B cell (primary cell): ENCODE measurements at regions of chr4 and their contacts with region 1.

Region 1: DNA sequence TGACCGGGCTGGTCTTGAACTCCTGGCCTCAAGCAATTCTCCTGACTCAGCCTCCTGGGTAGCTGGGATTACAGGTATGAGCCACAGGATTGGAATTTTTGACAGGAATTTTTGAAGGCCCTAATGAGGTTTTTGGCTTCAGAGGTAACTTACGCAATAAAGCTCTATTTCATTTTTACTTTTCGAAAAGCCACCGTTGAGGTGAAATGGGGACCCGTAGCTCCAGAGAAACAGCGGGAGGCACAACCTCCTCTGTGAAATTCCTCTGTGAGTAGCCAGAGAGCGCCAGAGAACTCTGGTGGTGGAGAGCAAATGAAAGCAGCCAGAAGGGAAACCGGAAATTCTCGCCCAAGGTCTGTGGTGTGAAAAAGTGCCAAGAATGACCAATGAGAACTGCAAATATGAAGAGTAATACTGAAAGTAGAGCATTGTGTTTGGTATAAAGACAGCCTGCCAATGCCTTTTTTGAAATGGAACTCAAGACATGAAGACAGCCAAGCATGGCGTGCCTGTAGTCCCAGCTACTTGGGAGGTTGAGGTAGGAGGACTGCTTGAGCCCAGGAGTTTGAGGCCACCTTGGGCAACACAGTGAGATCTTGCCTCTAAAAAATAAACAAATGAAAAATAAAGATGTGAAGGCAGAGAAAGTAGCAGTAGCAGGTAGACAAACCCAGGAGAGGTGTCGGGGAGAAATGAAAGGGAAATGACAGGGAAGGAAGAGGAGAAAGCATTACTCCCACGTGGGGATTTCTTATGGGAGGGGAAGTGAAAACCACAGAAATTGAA is 33.0 kb upstream of the TMEM131L start:
- DNase-seq: peak; percentile 88
- ATAC-seq: peak; percentile 81
- H3K4me3 ChIP-seq: peak overlapping the region; percentile 29 to 65 (median 40)
- H3K4me3 Mint-ChIP-seq: peak overlapping the region; percentile 78
- H3K27ac ChIP-seq: peak overlapping the region; percentile 84 to 85
- H3K27ac Mint-ChIP-seq: peak overlapping the region; percentile 84
- H3K4me1 ChIP-seq: peaks cover 60 to 64% of the 10 kb centered on the region in 2 donors
- H3K4me1 Mint-ChIP-seq: peaks cover 65% of the 10 kb centered on the region
- H3K27me3 ChIP-seq: no peaks in the 10 kb centered on the region
- H3K27me3 Mint-ChIP-seq: no peaks in the 10 kb centered on the region
- CTCF ChIP-seq: peak; percentile 77

Region 2: DNA sequence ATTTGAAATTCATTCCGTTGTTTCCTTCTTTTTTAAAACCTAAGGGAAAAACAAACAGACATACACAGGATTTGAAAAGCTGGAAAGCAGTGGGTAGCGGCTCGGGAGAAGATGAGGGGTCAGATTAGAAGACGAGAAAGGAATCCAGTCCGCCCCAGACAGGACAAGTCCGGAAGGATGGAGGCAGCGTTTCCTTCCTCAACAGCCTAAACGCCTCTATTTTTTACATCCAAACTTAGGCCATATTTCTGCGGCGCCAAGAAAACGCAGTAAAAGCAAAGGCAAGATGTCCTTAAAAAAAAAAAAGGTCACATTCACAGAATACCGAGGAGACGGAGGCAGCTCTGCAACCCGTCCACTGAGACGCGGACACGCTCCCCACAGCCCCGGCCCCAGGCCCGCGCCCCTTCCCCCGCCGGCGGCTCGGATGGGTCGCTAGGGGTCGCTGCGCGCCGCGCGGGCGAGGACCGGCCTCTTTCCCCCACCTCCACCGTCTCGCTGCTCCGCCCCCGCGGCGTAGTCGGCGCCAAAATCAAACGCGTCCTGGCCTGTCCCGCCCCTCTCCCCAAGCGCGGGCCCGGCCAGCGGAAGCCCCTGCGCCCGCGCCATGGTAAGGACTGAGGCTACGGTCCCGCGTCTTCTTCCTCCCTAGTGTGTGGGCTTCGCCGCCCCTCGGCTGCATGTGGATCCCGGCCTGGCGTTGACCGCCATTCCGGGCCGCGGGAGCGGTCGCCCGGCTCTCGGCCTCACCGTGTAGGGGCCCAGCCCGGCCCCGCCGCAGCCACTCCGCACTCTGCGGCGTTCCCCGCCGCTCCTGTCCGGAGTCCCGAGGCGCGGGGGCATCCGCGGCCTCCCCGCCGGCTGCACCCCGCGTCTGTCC is 88.8 kb before region 1 on chr4 and contains the start of gene MND1:
- CTCF ChIA-PET with region 1: interaction called, 15 read pairs
- POLR2A ChIA-PET with region 1: no interaction called
- intact Hi-C with region 1: loop called (anchors 1 kb)
- DNase-seq: peak; percentile 90
- ATAC-seq: peak; percentile 92
- H3K4me3 ChIP-seq: peak within 1 kb of the TSS; percentile 62 to 90 (median 74)
- H3K4me3 Mint-ChIP-seq: peak within 1 kb of the TSS; percentile 95
- H3K27ac ChIP-seq: no peak within 1 kb of the TSS
- H3K27ac Mint-ChIP-seq: peak within 1 kb of the TSS; percentile 33
- H3K4me1 ChIP-seq: peaks cover 25% of the 10 kb centered on the region in 2 donors
- H3K4me1 Mint-ChIP-seq: peaks cover 42% of the 10 kb centered on the region
- H3K27me3 ChIP-seq: no peaks in the 10 kb centered on the region
- H3K27me3 Mint-ChIP-seq: no peaks in the 10 kb centered on the region
- CTCF ChIP-seq: peak; percentile 98
- total RNA-seq, gene MND1: not detected in 2 replicates

Region 3: GRCh38 chr4:153393397-153393796 is 39.8 kb before region 1 on chr4:
- CTCF ChIA-PET with region 1: no interaction called
- POLR2A ChIA-PET with region 1: no interaction called
- intact Hi-C with region 1: no loop called
- DNase-seq: no peak
- ATAC-seq: no peak
- H3K4me3 ChIP-seq: no peak overlapping the region
- H3K4me3 Mint-ChIP-seq: no peak overlapping the region
- H3K27ac ChIP-seq: no peak overlapping the region
- H3K27ac Mint-ChIP-seq: no peak overlapping the region
- H3K4me1 ChIP-seq: no peaks in the 10 kb centered on the region
- H3K4me1 Mint-ChIP-seq: no peaks in the 10 kb centered on the region
- H3K27me3 ChIP-seq: no peaks in the 10 kb centered on the region
- H3K27me3 Mint-ChIP-seq: no peaks in the 10 kb centered on the region
- CTCF ChIP-seq: no peak

Region 4: DNA sequence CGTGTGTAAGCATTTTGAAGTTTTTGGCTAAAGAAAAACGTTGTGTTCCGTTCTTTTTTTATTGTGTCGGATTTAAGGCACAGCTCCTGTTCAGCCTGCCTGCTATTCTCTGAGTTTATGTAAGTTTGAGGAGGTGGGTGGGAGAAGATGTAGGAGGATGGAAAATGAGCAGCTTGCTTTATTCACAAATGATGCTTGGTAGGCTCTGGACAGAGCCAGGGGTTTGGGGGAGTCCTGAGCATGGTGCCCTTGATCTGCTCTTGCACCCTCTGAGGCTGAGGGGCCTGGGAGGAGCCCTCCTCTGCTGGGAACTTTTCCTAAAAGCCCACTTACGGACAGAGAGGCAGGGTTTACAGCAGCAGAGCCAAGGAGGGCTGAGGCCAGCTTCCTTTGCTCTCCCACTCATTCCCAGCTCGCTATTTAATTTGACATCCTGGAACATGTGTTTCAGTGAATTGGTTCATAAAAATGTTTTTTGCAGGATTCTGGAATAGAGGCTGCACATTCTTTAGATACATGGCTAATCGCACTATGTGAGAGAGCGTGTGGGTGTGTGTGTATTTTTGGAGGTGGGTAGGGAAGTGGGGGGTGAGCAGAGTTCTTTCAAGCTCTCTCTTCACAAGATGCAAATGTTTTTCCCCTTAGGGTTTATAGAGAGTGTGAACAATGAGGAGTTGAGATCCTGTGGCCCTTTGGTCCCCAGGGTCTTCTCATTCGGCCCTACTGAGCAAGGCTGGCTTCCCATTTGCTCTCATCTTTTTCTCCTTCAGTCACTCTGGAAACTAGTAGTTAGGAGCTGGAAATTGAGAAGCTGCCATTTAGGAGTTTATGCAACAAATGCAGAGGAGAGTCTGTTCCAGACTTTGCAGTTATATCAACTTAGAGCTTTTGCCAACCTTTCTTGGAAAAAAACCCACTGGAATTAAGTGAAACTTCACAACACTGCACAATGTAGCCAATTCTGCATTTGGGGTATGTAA is 65.1 kb after region 1 on chr4:
- CTCF ChIA-PET with region 1: interaction called, 24 read pairs
- POLR2A ChIA-PET with region 1: no interaction called
- intact Hi-C with region 1: no loop called
- DNase-seq: peak; percentile 62
- ATAC-seq: peak; percentile 82
- H3K4me3 ChIP-seq: peak overlapping the region in 2 of 5 experiments; percentile 18 to 30
- H3K4me3 Mint-ChIP-seq: peak overlapping the region; percentile 75
- H3K27ac ChIP-seq: peak overlapping the region; percentile 7 to 98
- H3K27ac Mint-ChIP-seq: peak overlapping the region; percentile 85
- H3K4me1 ChIP-seq: peaks cover 80 to 83% of the 10 kb centered on the region in 2 donors
- H3K4me1 Mint-ChIP-seq: peaks cover 91% of the 10 kb centered on the region
- H3K27me3 ChIP-seq: no peaks in the 10 kb centered on the region
- H3K27me3 Mint-ChIP-seq: no peaks in the 10 kb centered on the region
- CTCF ChIP-seq: no peak

Region 5: DNA sequence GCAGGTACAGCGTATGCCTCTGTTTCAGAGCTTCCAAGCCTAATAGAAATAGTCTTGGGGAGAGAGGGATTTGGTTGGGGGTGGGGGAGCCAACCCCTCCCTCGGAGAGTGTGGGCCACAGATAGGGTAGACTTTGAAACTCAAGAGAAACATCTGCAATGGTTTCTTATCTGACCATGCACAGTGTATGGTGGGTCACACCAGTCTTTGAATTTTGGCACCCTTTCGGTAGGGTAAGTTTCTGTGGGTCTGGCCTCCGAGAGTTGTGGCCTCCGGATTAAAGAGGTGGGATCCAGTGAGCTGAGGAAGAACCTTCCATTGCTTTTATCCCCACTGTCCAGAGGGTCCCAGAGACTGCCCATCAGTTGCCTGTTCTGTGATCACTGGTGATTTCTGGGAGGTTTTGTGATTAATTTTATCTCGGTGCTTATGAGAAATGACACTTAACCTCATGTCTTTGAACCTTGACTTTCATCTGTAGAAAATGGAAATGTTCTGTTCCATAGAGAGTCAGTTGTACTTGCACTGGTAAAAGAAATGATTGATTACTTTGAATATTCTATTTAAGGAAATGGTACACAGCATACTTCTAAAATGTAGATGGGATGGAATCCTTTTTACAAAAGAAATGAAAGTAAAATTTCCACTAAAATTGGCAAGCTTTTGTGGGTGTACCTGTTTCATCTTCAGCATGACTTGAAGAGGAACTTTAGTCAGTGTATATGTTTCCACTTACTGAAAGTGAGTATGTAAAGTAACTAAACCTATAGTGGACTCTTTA is 95.7 kb after region 1 on chr4:
- CTCF ChIA-PET with region 1: interaction called, 18 read pairs
- POLR2A ChIA-PET with region 1: interaction called, 3 read pairs
- intact Hi-C with region 1: no loop called
- DNase-seq: no peak
- ATAC-seq: no peak
- H3K4me3 ChIP-seq: no peak overlapping the region
- H3K4me3 Mint-ChIP-seq: peak overlapping the region; percentile 51
- H3K27ac ChIP-seq: peak overlapping the region; percentile 65 to 87
- H3K27ac Mint-ChIP-seq: peak overlapping the region; percentile 97
- H3K4me1 ChIP-seq: peaks cover 89% of the 10 kb centered on the region in 2 donors
- H3K4me1 Mint-ChIP-seq: peaks cover 87% of the 10 kb centered on the region
- H3K27me3 ChIP-seq: no peaks in the 10 kb centered on the region
- H3K27me3 Mint-ChIP-seq: no peaks in the 10 kb centered on the region
- CTCF ChIP-seq: no peak

Region 6: GRCh38 chr4:153541456-153542096 is 108.4 kb after region 1 on chr4:
- CTCF ChIA-PET with region 1: interaction called, 19 read pairs
- POLR2A ChIA-PET with region 1: no interaction called
- intact Hi-C with region 1: no loop called
- DNase-seq: no peak
- ATAC-seq: no peak
- H3K4me3 ChIP-seq: no peak overlapping the region
- H3K4me3 Mint-ChIP-seq: no peak overlapping the region
- H3K27ac ChIP-seq: peak overlapping the region in 1 of 2 donors; percentile 44
- H3K27ac Mint-ChIP-seq: peak overlapping the region; percentile 41
- H3K4me1 ChIP-seq: peaks cover 37 to 53% of the 10 kb centered on the region in 2 donors
- H3K4me1 Mint-ChIP-seq: peaks cover 80% of the 10 kb centered on the region
- H3K27me3 ChIP-seq: no peaks in the 10 kb centered on the region
- H3K27me3 Mint-ChIP-seq: no peaks in the 10 kb centered on the region
- CTCF ChIP-seq: no peak

Region 7: GRCh38 chr4:153643406-153644383 is 210.5 kb after region 1 on chr4:
- CTCF ChIA-PET with region 1: interaction called, 12 read pairs
- POLR2A ChIA-PET with region 1: interaction called, 5 read pairs
- intact Hi-C with region 1: loop called (anchors 2 kb)
- DNase-seq: peak; percentile 80
- ATAC-seq: peak; percentile 96
- H3K4me3 ChIP-seq: no peak overlapping the region
- H3K4me3 Mint-ChIP-seq: no peak overlapping the region
- H3K27ac ChIP-seq: no peak overlapping the region
- H3K27ac Mint-ChIP-seq: no peak overlapping the region
- H3K4me1 ChIP-seq: no peaks in the 10 kb centered on the region
- H3K4me1 Mint-ChIP-seq: peaks cover 8% of the 10 kb centered on the region
- H3K27me3 ChIP-seq: no peaks in the 10 kb centered on the region
- H3K27me3 Mint-ChIP-seq: no peaks in the 10 kb centered on the region
- CTCF ChIP-seq: peak; percentile 81

Region 8: DNA sequence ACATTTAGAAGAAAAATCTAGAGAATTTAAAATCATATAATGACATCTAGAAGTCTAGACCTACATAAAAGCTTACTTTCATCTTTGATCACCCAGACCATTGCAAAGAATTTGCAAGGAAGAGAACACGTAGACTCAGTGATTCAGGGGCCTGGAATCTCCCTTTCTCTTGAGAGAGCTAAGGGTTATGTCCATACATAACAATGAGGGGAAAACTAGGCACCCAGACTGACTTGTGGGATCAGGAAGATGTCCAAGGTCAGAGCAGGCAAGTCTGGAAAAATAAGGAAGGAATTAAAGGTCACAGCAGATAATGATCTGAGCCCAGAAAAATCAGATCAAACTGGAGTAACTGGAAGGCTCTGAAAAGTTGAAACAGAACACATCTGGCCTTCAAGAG is 554.1 kb after region 1 on chr4:
- CTCF ChIA-PET with region 1: no interaction called
- POLR2A ChIA-PET with region 1: no interaction called
- intact Hi-C with region 1: no loop called
- DNase-seq: no peak
- ATAC-seq: no peak
- H3K4me3 ChIP-seq: no peak overlapping the region
- H3K4me3 Mint-ChIP-seq: no peak overlapping the region
- H3K27ac ChIP-seq: no peak overlapping the region
- H3K27ac Mint-ChIP-seq: no peak overlapping the region
- H3K4me1 ChIP-seq: no peaks in the 10 kb centered on the region
- H3K4me1 Mint-ChIP-seq: no peaks in the 10 kb centered on the region
- H3K27me3 ChIP-seq: no peaks in the 10 kb centered on the region
- H3K27me3 Mint-ChIP-seq: no peaks in the 10 kb centered on the region
- CTCF ChIP-seq: no peak